Endothelial cell of umbilical vein (primary cell): ENCODE measurements at regions of chr13 and their contacts with region 1.

Region 1: DNA sequence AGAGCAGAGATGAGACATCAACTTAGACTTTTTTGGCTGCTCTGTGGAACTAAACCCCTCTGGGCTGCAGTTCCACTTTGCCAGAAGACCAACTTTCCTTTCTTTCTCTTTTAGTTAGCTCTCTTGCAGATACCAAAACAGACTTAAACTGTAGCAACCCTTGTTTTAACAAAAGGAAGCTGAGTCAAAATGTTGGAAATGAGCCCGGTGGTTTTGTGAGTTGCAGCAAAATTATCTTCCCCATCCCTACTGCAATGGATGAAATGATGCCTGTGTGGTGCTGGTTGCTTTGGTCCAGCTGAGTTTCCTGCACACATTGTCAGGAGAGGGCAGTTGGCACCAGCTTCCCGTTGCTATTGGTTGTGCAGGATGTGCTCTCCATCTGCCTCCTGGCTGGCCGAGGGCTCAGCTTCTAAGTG is 115.3 kb downstream of the LRCH1 start:
- DNase-seq: peak; percentile 89
- H3K4me3 ChIP-seq: no peak overlapping the region
- H3K27ac ChIP-seq: peak overlapping the region; percentile 13
- H3K4me1 ChIP-seq: peaks cover 38% of the 10 kb centered on the region
- H3K27me3 ChIP-seq: no peaks in the 10 kb centered on the region
- CTCF ChIP-seq: no peak
- POLR2A ChIP-seq: no peak

Region 2: GRCh38 chr13:46655377-46656180 is 12.7 kb before region 1 on chr13:
- CTCF ChIA-PET with region 1: interaction called, 7 read pairs
- POLR2A ChIA-PET with region 1: interaction called, 7 read pairs
- dilution Hi-C with region 1: no loop called
- intact Hi-C with region 1: loop called (anchors 1 kb)
- DNase-seq: peak; percentile 86
- H3K4me3 ChIP-seq: peak overlapping the region in 2 of 3 experiments; percentile 9 to 51
- H3K27ac ChIP-seq: peak overlapping the region; percentile 86
- H3K4me1 ChIP-seq: peaks cover 35% of the 10 kb centered on the region
- H3K27me3 ChIP-seq: no peaks in the 10 kb centered on the region
- CTCF ChIP-seq: no peak
- POLR2A ChIP-seq: no peak

Region 3: GRCh38 chr13:46687810-46688209 is 19.5 kb after region 1 on chr13:
- CTCF ChIA-PET with region 1: interaction called, 3 read pairs
- POLR2A ChIA-PET with region 1: interaction called, 3 read pairs
- dilution Hi-C with region 1: no loop called
- intact Hi-C with region 1: loop called (anchors 2 kb)
- DNase-seq: no peak
- H3K4me3 ChIP-seq: no peak overlapping the region
- H3K27ac ChIP-seq: no peak overlapping the region
- H3K4me1 ChIP-seq: no peaks in the 10 kb centered on the region
- H3K27me3 ChIP-seq: no peaks in the 10 kb centered on the region
- CTCF ChIP-seq: no peak
- POLR2A ChIP-seq: no peak